HepG2 (cell line): ENCODE measurements at regions of chr15 and their contacts with region 1.

Region 1: GRCh38 chr15:82699726-82700125 is 9.9 kb downstream of the AP3B2 start:
- DNase-seq: no peak
- ATAC-seq: peak; percentile 62
- H3K4me3 ChIP-seq: no peak overlapping the region
- H3K27ac ChIP-seq: no peak overlapping the region
- H3K4me1 ChIP-seq: no peaks in the 10 kb centered on the region
- H3K27me3 ChIP-seq: peaks cover 4 to 17% of the 10 kb centered on the region in 2 experiments; a peak in 4 of 5 replicates
- CTCF ChIP-seq: no peak
- EP300 ChIP-seq: no peak
- POLR2A ChIP-seq: no peak
- RAD21 ChIP-seq: no peak

Region 2: DNA sequence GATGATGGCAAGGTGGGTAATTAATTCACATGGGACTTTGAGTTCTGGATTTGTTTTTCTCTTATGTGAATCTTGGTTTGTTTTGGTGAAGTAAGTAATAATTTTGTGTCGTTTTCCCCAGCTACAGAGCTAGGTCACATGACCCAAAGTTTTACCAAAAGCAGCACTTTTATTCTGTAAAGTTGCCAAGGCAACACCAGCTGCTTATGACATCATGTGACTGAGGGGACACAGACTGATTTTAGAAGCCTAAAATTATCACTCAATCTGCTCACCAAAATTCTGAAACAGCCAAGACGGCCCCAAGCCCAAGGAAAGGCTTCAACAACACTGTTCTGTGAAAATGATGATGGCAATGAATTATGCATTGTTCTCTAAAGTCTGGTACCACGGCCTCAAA is 717.8 kb before region 1 on chr15:
- CTCF ChIA-PET with region 1: no interaction called
- POLR2A ChIA-PET with region 1: no interaction called
- in situ Hi-C with region 1: no loop called
- intact Hi-C with region 1: loop called (anchors 10 kb)
- DNase-seq: no peak
- ATAC-seq: no peak
- H3K4me3 ChIP-seq: no peak overlapping the region
- H3K27ac ChIP-seq: no peak overlapping the region
- H3K4me1 ChIP-seq: no peaks in the 10 kb centered on the region
- H3K27me3 ChIP-seq: peaks cover 0 to 4% of the 10 kb centered on the region in 2 experiments; a peak in 2 of 5 replicates
- CTCF ChIP-seq: no peak
- EP300 ChIP-seq: no peak
- POLR2A ChIP-seq: no peak
- RAD21 ChIP-seq: no peak